Dorsolateral prefrontal cortex (tissue), 120 donors: ENCODE measurements at regions of chr12 and their contacts with region 1.

Region 1: DNA sequence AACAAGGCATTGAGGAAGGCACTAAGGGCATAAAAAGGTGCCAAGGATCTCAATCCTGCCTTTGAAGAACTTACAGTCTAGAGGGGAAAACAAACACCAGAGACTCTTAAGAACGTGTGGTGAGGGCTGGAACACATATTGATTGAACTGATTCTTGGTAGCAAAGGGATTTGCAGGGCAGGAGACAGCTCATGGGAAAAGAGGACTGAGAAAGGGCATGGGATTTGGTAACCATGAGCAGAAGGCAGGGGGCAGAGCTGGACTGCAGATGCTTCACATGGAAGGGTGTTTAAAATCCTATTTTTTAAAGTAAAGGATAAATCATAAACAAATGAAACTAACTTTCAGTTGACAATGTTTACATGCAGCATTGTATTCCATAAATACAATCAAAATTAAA is 203.1 kb downstream of the ITPR2 start:
- DNase-seq: peak in 3 of 10 donors; percentile 33 to 51 (median 41)
- H3K4me3 ChIP-seq: peak overlapping the region in 15 of 59 donors; percentile 3 to 49 (median 27)
- H3K27ac ChIP-seq: peak overlapping the region in 41 of 59 donors; percentile 2 to 80 (median 50)
- H3K27me3 ChIP-seq: no peaks in the 10 kb centered on the region
- CTCF ChIP-seq: peak in 55 of 56 donors; percentile 38 to 79 (median 61)

Region 2: DNA sequence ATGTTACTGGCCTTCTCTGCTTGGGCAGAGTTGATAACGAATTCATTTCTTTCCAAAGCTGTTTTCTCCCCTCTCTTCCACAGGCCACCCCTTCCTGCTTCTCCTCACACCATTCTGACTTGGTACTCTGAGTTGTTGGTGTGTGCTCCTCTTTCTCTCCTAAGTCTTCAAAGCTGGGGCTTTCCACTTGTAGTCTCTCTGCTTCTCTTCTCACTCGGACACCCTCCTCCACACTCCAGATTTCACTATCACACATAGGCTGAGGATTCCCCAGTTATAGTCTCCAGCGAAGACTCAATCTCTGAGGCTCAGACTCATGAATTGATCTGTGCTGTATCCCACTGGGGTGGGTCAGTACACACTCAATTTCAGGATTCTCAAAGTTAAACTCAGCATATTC is 233.5 kb before region 1 on chr12:
- intact Hi-C with region 1: no loop called
- DNase-seq: no peak
- H3K4me3 ChIP-seq: no peak overlapping the region
- H3K27ac ChIP-seq: no peak overlapping the region
- H3K27me3 ChIP-seq: no peaks in the 10 kb centered on the region
- CTCF ChIP-seq: no peak

Region 3: DNA sequence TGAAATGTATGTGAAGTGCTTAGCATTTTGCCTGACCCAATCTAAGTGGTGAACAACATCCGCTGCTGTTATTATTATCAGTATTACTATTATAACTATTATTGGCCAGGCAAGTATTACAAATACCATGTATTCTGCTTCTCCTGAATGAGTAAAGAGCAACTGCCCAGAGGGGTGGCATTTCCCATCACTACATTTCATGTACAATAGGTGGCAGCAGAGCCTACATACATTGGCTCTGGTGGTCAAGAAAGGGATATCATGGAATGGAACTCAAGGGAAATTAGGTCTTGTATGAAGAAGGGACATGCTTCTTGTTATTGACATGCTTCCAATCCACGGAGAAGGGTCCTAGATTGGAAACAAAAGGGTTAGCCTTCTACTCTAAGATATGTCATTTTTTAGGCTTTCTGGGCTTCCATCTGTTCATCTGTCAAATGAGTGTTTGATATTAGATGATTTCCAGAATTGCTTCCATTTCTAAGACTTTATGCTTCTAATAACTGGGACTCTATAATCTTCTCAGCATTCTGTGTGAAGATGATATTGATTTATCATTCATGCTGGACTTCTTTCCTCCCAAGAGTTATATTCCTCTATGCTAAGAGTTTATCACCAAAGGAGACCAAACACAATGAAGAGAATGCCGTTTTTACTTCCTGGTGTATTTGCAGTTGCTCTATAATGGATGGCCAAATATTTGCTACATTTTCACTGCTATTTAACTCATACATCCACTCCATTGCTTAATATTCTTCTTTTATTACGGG is 195.4 kb before region 1 on chr12:
- intact Hi-C with region 1: loop called in 1 of 2 experiments (anchors 10 kb)
- DNase-seq: peak in 2 of 10 donors; percentile 11 to 26
- H3K4me3 ChIP-seq: no peak overlapping the region
- H3K27ac ChIP-seq: peak overlapping the region in 1 of 59 donors; percentile 3
- H3K27me3 ChIP-seq: no peaks in the 10 kb centered on the region
- CTCF ChIP-seq: peak; percentile 25 to 86 (median 65)

Region 4: GRCh38 chr12:26691234-26691970 is 61.5 kb after region 1 on chr12:
- intact Hi-C with region 1: loop called in 1 of 2 experiments (anchors 10 kb)
- DNase-seq: peak in 5 of 10 donors; percentile 34 to 46 (median 38)
- H3K4me3 ChIP-seq: peak overlapping the region in 26 of 59 donors; percentile 3 to 53 (median 22)
- H3K27ac ChIP-seq: peak overlapping the region in 8 of 59 donors; percentile 9 to 60 (median 20)
- H3K27me3 ChIP-seq: no peaks in the 10 kb centered on the region
- CTCF ChIP-seq: no peak